GM23248 (cell line): ENCODE measurements at regions of chr3 and their contacts with region 1.

Region 1: DNA sequence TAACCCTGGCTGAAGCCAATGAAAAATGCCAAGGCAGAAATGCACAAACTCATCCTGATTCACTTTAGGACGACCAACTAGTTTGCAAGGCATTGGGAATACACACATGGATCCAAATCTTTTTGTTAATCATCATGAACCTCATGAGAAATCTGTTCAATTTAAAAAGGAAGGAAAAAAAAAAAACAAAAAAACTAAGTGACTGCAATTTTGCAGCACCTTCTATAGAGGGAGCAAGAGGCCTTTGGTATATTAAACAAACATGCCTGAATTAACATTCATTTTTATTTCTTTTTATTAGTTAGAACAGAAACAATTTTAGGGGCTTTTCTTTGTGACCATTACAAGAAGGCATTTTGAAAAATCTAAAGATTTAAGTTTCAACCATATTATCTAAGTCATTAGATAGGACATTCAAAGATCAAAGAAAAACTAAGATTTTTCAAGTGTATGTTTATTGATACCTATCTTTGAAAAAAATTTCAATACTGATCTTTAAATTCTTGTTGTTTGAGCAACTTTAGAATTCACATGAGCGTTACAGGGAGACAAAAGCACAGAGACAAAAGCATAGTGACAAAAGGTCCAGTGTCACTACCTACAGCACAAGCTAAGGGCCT is 182.4 kb downstream of the CBLB start:
- DNase-seq: peak; percentile 74
- H3K4me3 ChIP-seq: no peak overlapping the region
- H3K27ac ChIP-seq: peak overlapping the region; percentile 14
- H3K4me1 ChIP-seq: peaks cover 30% of the 10 kb centered on the region
- H3K27me3 ChIP-seq: no peaks in the 10 kb centered on the region

Region 2: DNA sequence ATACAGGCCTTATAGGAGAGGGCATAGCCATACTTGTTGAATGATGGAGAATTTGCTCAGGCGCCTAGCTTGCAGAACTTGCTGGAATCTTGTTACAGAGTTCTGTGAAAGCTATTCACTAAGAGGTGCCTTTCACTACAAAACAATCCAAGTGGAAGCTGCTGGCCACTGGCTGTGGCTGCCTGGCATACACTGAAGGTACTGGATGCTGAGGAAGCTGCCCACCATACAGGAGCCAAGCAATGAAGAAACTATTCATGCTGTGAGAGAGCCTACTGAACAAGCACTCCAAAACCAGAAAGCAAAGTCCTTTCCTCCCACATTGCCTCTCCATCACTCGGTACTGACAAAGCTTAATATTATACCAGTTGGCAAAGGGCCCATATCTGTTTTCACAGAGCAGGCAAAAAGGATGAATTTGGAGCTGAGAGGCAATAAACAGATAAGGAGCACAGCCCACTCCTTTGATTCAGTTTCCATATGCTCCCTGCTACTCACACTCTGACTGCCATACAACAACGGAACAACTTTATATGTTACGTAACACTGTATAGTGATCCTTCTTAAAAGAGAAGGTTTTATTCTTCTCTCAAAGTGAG is 512.3 kb before region 1 on chr3:
- in situ Hi-C with region 1: no loop called
- DNase-seq: no peak
- H3K4me3 ChIP-seq: no peak overlapping the region
- H3K27ac ChIP-seq: no peak overlapping the region
- H3K4me1 ChIP-seq: no peaks in the 10 kb centered on the region
- H3K27me3 ChIP-seq: no peaks in the 10 kb centered on the region

Region 3: GRCh38 chr3:106609666-106610301 is 923.4 kb after region 1 on chr3:
- in situ Hi-C with region 1: loop called (anchors 10 kb)
- DNase-seq: peak; percentile 86
- H3K4me3 ChIP-seq: no peak overlapping the region
- H3K27ac ChIP-seq: peak overlapping the region; percentile 48
- H3K4me1 ChIP-seq: peaks cover 31% of the 10 kb centered on the region
- H3K27me3 ChIP-seq: no peaks in the 10 kb centered on the region

Region 4: GRCh38 chr3:107064445-107065060 is 1378.2 kb after region 1 on chr3:
- in situ Hi-C with region 1: loop called (anchors 25 kb)
- DNase-seq: peak; percentile 80
- H3K4me3 ChIP-seq: no peak overlapping the region
- H3K27ac ChIP-seq: peak overlapping the region; percentile 52
- H3K4me1 ChIP-seq: peaks cover 64% of the 10 kb centered on the region
- H3K27me3 ChIP-seq: no peaks in the 10 kb centered on the region